Gastrocnemius medialis (tissue), 4 donors: ENCODE measurements at regions of chr15 and their contacts with region 1.

Region 1: GRCh38 chr15:61038910-61039309 is 190.2 kb downstream of the RORA start:
- DNase-seq: no peak
- ATAC-seq: peak in 1 of 2 donors; percentile 35
- H3K4me3 ChIP-seq: no peak overlapping the region
- H3K27ac ChIP-seq: peak overlapping the region in 3 of 4 donors; percentile 5 to 49 (median 15)
- H3K4me1 ChIP-seq: peaks cover 26 to 29% of the 10 kb centered on the region in 2 donors
- H3K27me3 ChIP-seq: no peaks in the 10 kb centered on the region
- CTCF ChIP-seq: no peak
- POLR2A ChIP-seq: no peak

Region 2: DNA sequence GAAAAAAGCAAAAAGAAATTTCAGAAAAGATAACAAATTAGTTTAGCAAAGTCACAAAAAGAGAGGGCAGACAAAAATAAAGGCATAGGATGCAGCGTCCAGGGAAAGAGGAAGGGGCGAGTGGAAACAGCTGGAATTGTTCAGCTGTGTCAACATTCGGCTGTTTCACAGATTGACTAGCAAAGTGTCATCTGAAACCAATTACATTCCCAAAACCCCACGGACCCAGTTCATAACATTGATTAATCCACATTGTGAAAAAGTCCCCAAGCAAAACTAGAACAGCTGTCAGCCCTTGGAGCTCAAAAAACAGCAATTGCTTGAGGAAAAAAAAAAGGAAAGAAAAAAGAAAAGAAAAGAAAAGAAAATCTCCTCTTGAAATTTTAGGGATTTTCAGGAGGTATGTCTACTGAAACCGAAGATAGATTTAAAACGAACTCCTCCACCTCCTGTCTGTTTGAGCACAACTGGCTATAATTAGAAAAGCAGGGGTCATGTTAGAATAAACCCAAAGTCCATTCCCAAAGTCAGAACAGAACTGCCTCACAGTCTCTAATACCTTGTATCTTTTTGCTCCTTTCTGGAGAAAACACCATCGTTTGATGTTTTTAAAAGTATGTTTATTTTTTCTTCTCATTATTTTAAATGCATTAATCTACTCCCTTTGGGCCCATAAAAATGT is 30.6 kb after region 1 on chr15:
- in situ Hi-C with region 1: no loop called
- intact Hi-C with region 1: loop called (anchors 1 kb)
- DNase-seq: no peak
- ATAC-seq: no peak
- H3K4me3 ChIP-seq: peak overlapping the region in 1 of 4 donors; percentile 16
- H3K27ac ChIP-seq: no peak overlapping the region
- H3K4me1 ChIP-seq: peaks cover 29 to 56% of the 10 kb centered on the region in 2 donors
- H3K27me3 ChIP-seq: no peaks in the 10 kb centered on the region
- CTCF ChIP-seq: no peak
- POLR2A ChIP-seq: no peak